CD8-positive, alpha-beta T cell (primary cell): ENCODE measurements at regions of chr11 and their contacts with region 1.

Region 1: DNA sequence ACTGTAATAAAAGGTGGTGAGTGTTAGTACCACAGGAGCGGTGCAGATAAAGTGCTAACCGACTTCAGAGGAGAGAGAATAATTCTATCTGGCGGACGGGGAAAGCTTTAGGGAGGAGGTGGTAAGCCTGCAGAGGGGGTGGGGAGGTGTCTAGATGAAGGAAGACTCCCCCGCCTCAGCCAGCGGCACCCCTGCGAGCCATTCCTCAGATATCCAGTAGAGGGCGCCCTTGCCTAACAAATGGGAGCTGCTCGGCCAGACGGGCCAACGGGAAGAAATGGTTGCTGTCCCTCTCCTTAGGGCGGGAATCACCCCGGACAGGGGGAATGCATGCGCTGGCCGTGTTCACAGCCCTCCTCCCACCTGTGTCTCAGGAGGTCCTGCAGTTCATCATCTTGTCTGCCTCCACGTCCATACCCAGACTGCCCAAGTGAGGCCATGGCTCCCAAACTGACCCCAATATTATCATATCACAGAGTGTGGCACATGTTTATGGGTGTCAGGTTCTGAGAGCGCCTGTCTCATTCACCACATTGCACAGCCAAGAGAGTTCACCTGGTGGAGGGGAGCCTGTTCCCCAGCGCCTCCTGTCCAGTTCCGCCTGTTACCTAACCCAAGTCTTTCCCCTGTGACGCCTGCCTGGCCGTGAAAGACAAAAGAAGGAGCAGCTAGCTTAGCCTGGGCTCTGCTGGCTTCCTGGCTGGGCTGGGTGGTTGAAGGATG is 85.5 kb downstream of the ST3GAL4 start:
- DNase-seq: peak; percentile 48 to 83 (median 70)
- ATAC-seq: peak; percentile 70
- H3K4me3 ChIP-seq: no peak overlapping the region
- H3K4me3 Mint-ChIP-seq: no peak overlapping the region
- H3K27ac ChIP-seq: no peak overlapping the region
- H3K27ac Mint-ChIP-seq: no peak overlapping the region
- H3K4me1 ChIP-seq: peaks cover 5% of the 10 kb centered on the region
- H3K4me1 Mint-ChIP-seq: peaks cover 5% of the 10 kb centered on the region
- H3K27me3 ChIP-seq: no peaks in the 10 kb centered on the region
- H3K27me3 Mint-ChIP-seq: peaks cover 6% of the 10 kb centered on the region
- CTCF ChIP-seq: peak; percentile 96

Region 2: DNA sequence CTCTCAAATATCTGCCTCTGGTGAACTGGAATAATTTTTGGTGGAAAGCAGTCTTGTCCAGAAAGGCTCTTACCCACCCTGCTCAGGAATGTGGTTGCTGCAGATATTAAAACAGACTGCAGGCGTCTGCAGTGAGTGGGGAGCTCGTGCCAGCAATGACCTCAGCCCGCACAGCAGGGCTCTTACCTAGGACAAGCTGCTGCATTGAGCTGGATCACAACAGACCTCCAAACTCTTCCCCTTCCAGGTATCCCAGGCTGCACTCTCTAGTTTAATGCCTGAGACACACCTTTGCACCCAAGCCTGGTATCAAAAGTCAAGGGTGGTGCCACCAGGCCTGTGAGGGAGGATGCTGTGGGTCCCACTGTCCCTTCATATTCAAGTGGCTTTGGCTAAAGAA is 308.6 kb before region 1 on chr11:
- CTCF ChIA-PET with region 1: no interaction called
- POLR2A ChIA-PET with region 1: no interaction called
- intact Hi-C with region 1: no loop called
- DNase-seq: no peak
- ATAC-seq: no peak
- H3K4me3 ChIP-seq: no peak overlapping the region
- H3K4me3 Mint-ChIP-seq: no peak overlapping the region
- H3K27ac ChIP-seq: no peak overlapping the region
- H3K27ac Mint-ChIP-seq: no peak overlapping the region
- H3K4me1 ChIP-seq: no peaks in the 10 kb centered on the region
- H3K4me1 Mint-ChIP-seq: no peaks in the 10 kb centered on the region
- H3K27me3 ChIP-seq: no peaks in the 10 kb centered on the region
- H3K27me3 Mint-ChIP-seq: no peaks in the 10 kb centered on the region
- CTCF ChIP-seq: no peak

Region 3: DNA sequence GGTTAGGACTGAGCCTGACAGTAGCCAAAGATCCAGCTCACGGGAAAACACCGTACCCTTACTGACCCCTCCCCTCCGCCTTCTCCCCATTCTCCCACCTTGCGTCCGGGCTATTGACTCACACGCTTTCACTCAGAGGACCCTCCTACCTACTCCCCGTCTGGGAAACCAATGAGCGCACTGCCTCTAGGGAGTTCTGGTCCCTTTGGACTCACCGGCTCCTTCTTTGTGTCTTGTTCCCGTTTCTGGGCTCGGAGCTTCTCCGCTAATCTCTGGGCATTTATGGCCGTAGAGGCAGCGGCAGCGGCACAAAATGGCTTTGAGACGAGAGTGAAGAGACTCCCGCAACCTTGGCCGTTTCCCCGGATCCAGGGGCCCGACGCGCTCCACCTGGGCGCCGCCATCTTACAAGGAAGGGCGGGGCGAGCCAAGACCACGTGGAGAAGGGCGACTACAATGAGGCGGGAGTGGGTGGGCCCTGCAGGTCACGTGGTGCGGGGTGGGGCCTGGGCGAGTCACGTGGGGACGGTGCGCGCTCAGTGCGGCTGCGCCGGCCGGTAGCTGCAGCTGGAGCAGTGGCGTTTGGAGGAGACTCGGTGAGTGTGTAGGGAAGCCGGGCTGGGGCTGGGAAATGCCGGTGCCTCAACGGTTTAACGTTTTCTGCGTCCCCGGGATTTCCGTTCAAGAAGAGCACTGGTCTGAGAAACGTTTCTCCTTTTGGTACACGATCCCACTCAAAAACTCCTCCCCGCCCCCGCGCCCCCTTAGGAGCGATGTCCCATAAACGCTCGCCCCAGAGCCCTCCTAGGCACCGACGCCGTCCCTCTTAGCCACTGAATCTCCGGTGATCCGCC is 229.5 kb before region 1 on chr11 and contains the starts of genes FAM118B and RPUSD4:
- CTCF ChIA-PET with region 1: no interaction called
- POLR2A ChIA-PET with region 1: no interaction called
- intact Hi-C with region 1: no loop called
- DNase-seq: peak; percentile 98 to 99 (median 98)
- ATAC-seq: peak; percentile 95
- H3K4me3 ChIP-seq: peak within 1 kb of the TSS; percentile 95 to 98
- H3K4me3 Mint-ChIP-seq: peak within 1 kb of the TSS; percentile 99
- H3K27ac ChIP-seq: peak within 1 kb of the TSS; percentile 71 to 80
- H3K27ac Mint-ChIP-seq: peak within 1 kb of the TSS; percentile 95
- H3K4me1 ChIP-seq: peaks cover 18% of the 10 kb centered on the region
- H3K4me1 Mint-ChIP-seq: peaks cover 40% of the 10 kb centered on the region
- H3K27me3 ChIP-seq: no peaks in the 10 kb centered on the region
- H3K27me3 Mint-ChIP-seq: no peaks in the 10 kb centered on the region
- CTCF ChIP-seq: no peak
- total RNA-seq, gene FAM118B: 0.64 to 0.79 TPM
- total RNA-seq, gene RPUSD4: 42.3 to 43.8 TPM

Region 4: GRCh38 chr11:126452241-126453101 is 11.5 kb after region 1 on chr11:
- CTCF ChIA-PET with region 1: no interaction called
- POLR2A ChIA-PET with region 1: no interaction called
- intact Hi-C with region 1: no loop called
- DNase-seq: no peak
- ATAC-seq: no peak
- H3K4me3 ChIP-seq: no peak overlapping the region
- H3K4me3 Mint-ChIP-seq: no peak overlapping the region
- H3K27ac ChIP-seq: no peak overlapping the region
- H3K27ac Mint-ChIP-seq: no peak overlapping the region
- H3K4me1 ChIP-seq: no peaks in the 10 kb centered on the region
- H3K4me1 Mint-ChIP-seq: no peaks in the 10 kb centered on the region
- H3K27me3 ChIP-seq: no peaks in the 10 kb centered on the region
- H3K27me3 Mint-ChIP-seq: no peaks in the 10 kb centered on the region
- CTCF ChIP-seq: no peak

Region 5: GRCh38 chr11:126489836-126490660 is 49.1 kb after region 1 on chr11:
- CTCF ChIA-PET with region 1: interaction called, 15 read pairs
- POLR2A ChIA-PET with region 1: no interaction called
- intact Hi-C with region 1: no loop called
- DNase-seq: no peak
- ATAC-seq: no peak
- H3K4me3 ChIP-seq: no peak overlapping the region
- H3K4me3 Mint-ChIP-seq: no peak overlapping the region
- H3K27ac ChIP-seq: no peak overlapping the region
- H3K27ac Mint-ChIP-seq: no peak overlapping the region
- H3K4me1 ChIP-seq: no peaks in the 10 kb centered on the region
- H3K4me1 Mint-ChIP-seq: no peaks in the 10 kb centered on the region
- H3K27me3 ChIP-seq: no peaks in the 10 kb centered on the region
- H3K27me3 Mint-ChIP-seq: peaks cover 2% of the 10 kb centered on the region
- CTCF ChIP-seq: no peak

Region 6: GRCh38 chr11:126680131-126680530 is 239.2 kb after region 1 on chr11:
- CTCF ChIA-PET with region 1: no interaction called
- POLR2A ChIA-PET with region 1: no interaction called
- intact Hi-C with region 1: no loop called
- DNase-seq: no peak
- ATAC-seq: no peak
- H3K4me3 ChIP-seq: no peak overlapping the region
- H3K4me3 Mint-ChIP-seq: no peak overlapping the region
- H3K27ac ChIP-seq: no peak overlapping the region
- H3K27ac Mint-ChIP-seq: no peak overlapping the region
- H3K4me1 ChIP-seq: no peaks in the 10 kb centered on the region
- H3K4me1 Mint-ChIP-seq: no peaks in the 10 kb centered on the region
- H3K27me3 ChIP-seq: no peaks in the 10 kb centered on the region
- H3K27me3 Mint-ChIP-seq: peaks cover 13% of the 10 kb centered on the region
- CTCF ChIP-seq: no peak

Region 7: GRCh38 chr11:126989942-126990715 is 549.2 kb after region 1 on chr11:
- CTCF ChIA-PET with region 1: interaction called, 18 read pairs
- POLR2A ChIA-PET with region 1: no interaction called
- intact Hi-C with region 1: loop called in 1 of 2 experiments (anchors 1 kb)
- DNase-seq: peak; percentile 10 to 59 (median 38)
- ATAC-seq: no peak
- H3K4me3 ChIP-seq: no peak overlapping the region
- H3K4me3 Mint-ChIP-seq: no peak overlapping the region
- H3K27ac ChIP-seq: no peak overlapping the region
- H3K27ac Mint-ChIP-seq: no peak overlapping the region
- H3K4me1 ChIP-seq: no peaks in the 10 kb centered on the region
- H3K4me1 Mint-ChIP-seq: no peaks in the 10 kb centered on the region
- H3K27me3 ChIP-seq: no peaks in the 10 kb centered on the region
- H3K27me3 Mint-ChIP-seq: peaks cover 23% of the 10 kb centered on the region
- CTCF ChIP-seq: peak; percentile 64

Region 8: GRCh38 chr11:127345819-127346459 is 905.0 kb after region 1 on chr11:
- CTCF ChIA-PET with region 1: interaction called, 5 read pairs
- POLR2A ChIA-PET with region 1: no interaction called
- intact Hi-C with region 1: loop called in 1 of 2 experiments (anchors 1 kb)
- DNase-seq: peak in 2 of 9 experiments; percentile 4 to 16
- ATAC-seq: no peak
- H3K4me3 ChIP-seq: no peak overlapping the region
- H3K4me3 Mint-ChIP-seq: no peak overlapping the region
- H3K27ac ChIP-seq: no peak overlapping the region
- H3K27ac Mint-ChIP-seq: no peak overlapping the region
- H3K4me1 ChIP-seq: no peaks in the 10 kb centered on the region
- H3K4me1 Mint-ChIP-seq: no peaks in the 10 kb centered on the region
- H3K27me3 ChIP-seq: no peaks in the 10 kb centered on the region
- H3K27me3 Mint-ChIP-seq: peaks cover 6% of the 10 kb centered on the region
- CTCF ChIP-seq: peak; percentile 45

Region 9: GRCh38 chr11:128164080-128164741 is 1723.3 kb after region 1 on chr11:
- CTCF ChIA-PET with region 1: no interaction called
- POLR2A ChIA-PET with region 1: no interaction called
- intact Hi-C with region 1: loop called in 1 of 2 experiments (anchors 10 kb)
- DNase-seq: no peak
- ATAC-seq: no peak
- H3K4me3 ChIP-seq: no peak overlapping the region
- H3K4me3 Mint-ChIP-seq: no peak overlapping the region
- H3K27ac ChIP-seq: no peak overlapping the region
- H3K27ac Mint-ChIP-seq: no peak overlapping the region
- H3K4me1 ChIP-seq: peaks cover 6% of the 10 kb centered on the region
- H3K4me1 Mint-ChIP-seq: peaks cover 9% of the 10 kb centered on the region
- H3K27me3 ChIP-seq: no peaks in the 10 kb centered on the region
- H3K27me3 Mint-ChIP-seq: no peaks in the 10 kb centered on the region
- CTCF ChIP-seq: no peak